Thyroid gland (tissue), 4 donors: ENCODE measurements at regions of chr10 and their contacts with region 1.

Region 1: GRCh38 chr10:15370856-15371701 is at the start of gene FAM171A1:
- DNase-seq: peak; percentile 59 to 61
- H3K4me3 ChIP-seq: peak within 1 kb of the TSS; percentile 23 to 58 (median 27)
- H3K27ac ChIP-seq: peak within 1 kb of the TSS in 1 of 3 donors; percentile 65
- H3K4me1 ChIP-seq: peaks cover 5 to 6% of the 10 kb centered on the region in 2 donors
- H3K27me3 ChIP-seq: no peaks in the 10 kb centered on the region
- CTCF ChIP-seq: peak in 2 of 6 experiments; percentile 30 to 53
- POLR2A ChIP-seq: no peak
- total RNA-seq, gene FAM171A1: 10.2 to 14.9 (median 13.3) TPM

Region 2: DNA sequence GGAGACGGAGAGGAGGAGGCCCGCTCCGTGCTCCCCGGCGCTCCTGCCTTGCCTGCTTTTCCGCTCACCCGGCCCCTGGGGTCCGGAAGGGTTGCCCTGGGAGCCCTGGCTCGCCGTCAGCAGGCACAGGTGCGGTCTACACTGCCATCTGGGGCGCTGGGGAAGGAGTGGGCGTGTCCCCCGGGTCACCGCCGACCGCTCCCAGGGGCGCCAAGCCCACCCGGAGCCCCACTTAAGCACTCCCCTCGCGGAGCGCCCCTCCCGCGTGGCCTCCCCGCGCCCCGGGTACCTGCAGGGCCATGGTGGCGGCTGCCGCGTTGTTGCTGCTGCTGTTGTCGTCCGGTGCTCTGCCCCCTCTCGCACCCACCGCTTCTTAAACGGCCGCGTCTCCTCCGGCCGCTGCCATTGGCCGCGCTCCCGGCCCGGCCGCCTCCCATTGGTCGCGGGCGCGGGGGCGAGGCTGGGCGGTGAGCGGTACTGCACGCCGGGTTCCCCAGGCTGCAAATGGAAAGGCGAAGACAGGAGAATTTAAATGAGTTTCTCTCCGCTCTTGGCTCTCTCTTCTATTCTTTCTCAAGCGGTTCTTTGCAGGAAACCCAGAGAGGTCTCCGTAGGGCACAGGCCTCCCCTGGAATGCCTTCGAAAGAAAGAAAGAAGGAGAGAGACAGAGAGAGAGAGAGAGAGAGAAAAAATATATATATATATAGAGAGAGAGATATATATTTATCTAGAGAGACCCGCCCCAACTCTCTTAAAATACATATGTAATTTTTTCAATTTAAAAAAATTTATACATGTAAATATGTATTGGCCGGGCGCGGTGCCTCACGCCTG is 282.4 kb before region 1 on chr10 and contains the start of gene ACBD7:
- intact Hi-C with region 1: no loop called
- DNase-seq: peak; percentile 82 to 83
- H3K4me3 ChIP-seq: peak within 1 kb of the TSS; percentile 10 to 36 (median 31)
- H3K27ac ChIP-seq: no peak within 1 kb of the TSS
- H3K4me1 ChIP-seq: peaks cover 4 to 9% of the 10 kb centered on the region in 2 donors
- H3K27me3 ChIP-seq: no peaks in the 10 kb centered on the region
- CTCF ChIP-seq: peak; percentile 8 to 70 (median 60)
- POLR2A ChIP-seq: peak in 1 of 2 donors; percentile 29
- total RNA-seq, gene ACBD7: 0.54 to 1.3 (median 1.0) TPM

Region 3: DNA sequence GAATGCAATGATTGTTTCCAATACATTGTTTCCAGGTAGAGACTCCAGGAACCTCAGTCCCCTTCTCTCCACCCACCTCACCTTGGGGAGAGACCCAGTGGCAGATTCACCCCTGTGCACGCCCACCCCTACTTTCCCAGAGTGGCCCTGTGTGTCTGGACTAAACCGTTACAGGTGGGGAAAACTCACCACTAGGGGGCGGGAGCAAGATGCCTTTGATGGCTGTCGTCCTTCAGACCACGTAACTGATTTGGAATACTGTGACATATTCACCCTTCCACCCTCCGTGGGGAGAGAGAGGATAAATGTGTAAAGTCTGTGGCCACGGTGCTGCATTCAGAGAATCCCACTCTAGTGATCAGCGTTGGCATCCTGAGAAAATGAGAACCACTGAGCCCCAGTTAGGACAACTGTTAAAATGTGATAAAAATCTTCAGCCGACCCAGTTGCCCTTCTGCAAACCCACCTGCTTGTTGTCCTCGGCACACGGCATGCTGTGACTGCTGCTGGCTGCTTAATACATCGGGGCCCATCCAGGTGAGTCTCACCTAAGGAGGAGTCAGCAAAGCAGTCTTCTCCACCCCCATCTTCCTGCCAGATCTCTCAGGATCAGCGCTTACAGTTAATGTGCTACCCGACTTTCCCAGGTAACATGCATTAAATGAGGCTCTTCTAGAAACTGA is 161.1 kb before region 1 on chr10:
- intact Hi-C with region 1: loop called (anchors 5 kb)
- DNase-seq: peak; percentile 85 to 86
- H3K4me3 ChIP-seq: no peak overlapping the region
- H3K27ac ChIP-seq: no peak overlapping the region
- H3K4me1 ChIP-seq: no peaks in the 10 kb centered on the region
- H3K27me3 ChIP-seq: no peaks in the 10 kb centered on the region
- CTCF ChIP-seq: peak; percentile 54 to 91 (median 73)
- POLR2A ChIP-seq: no peak

Region 4: DNA sequence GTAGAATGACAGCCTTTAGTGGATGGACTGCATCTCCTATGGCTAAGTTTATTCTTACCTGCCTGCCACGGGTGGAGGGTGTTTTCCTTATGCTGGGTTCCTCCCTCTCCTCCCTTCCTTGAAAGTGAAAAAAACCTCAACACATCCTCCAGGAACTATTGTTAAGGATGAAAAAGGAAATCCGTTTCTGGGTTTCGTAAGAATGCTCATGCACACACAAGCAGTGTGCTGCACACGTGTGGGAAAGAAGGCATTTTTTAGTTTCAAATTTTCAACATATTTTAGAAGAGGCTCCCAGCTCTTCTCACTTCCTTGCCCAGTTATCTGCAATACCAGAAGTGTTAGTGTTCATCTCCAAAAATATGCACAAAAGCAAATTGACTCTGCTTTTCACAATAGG is 90.6 kb before region 1 on chr10:
- intact Hi-C with region 1: no loop called
- DNase-seq: no peak
- H3K4me3 ChIP-seq: no peak overlapping the region
- H3K27ac ChIP-seq: no peak overlapping the region
- H3K4me1 ChIP-seq: no peaks in the 10 kb centered on the region
- H3K27me3 ChIP-seq: no peaks in the 10 kb centered on the region
- CTCF ChIP-seq: no peak
- POLR2A ChIP-seq: no peak